WTC11 (cell line): ENCODE measurements at regions of chr12 and their contacts with region 1.

Region 1: GRCh38 chr12:124906606-124907261 is 7.7 kb downstream of the UBC start:
- DNase-seq: peak; percentile 92
- ATAC-seq: peak; percentile 71
- H3K4me3 Mint-ChIP-seq: no peak overlapping the region
- H3K27ac Mint-ChIP-seq: no peak overlapping the region
- H3K4me1 Mint-ChIP-seq: peaks cover 35% of the 10 kb centered on the region
- H3K27me3 Mint-ChIP-seq: no peaks in the 10 kb centered on the region
- CTCF ChIP-seq: peak; percentile 91

Region 2: GRCh38 chr12:124842073-124842749 is 64.5 kb before region 1 on chr12:
- CTCF ChIA-PET with region 1: interaction called, 10 read pairs
- POLR2A ChIA-PET with region 1: no interaction called
- DNase-seq: no peak
- ATAC-seq: no peak
- H3K4me3 Mint-ChIP-seq: no peak overlapping the region
- H3K27ac Mint-ChIP-seq: peak overlapping the region; percentile 84
- H3K4me1 Mint-ChIP-seq: peaks cover 23% of the 10 kb centered on the region
- H3K27me3 Mint-ChIP-seq: no peaks in the 10 kb centered on the region
- CTCF ChIP-seq: no peak

Region 3: GRCh38 chr12:124869034-124869665 is 37.6 kb before region 1 on chr12:
- CTCF ChIA-PET with region 1: interaction called, 12 read pairs
- POLR2A ChIA-PET with region 1: no interaction called
- DNase-seq: peak; percentile 40
- ATAC-seq: peak; percentile 75
- H3K4me3 Mint-ChIP-seq: no peak overlapping the region
- H3K27ac Mint-ChIP-seq: peak overlapping the region; percentile 78
- H3K4me1 Mint-ChIP-seq: peaks cover 14% of the 10 kb centered on the region
- H3K27me3 Mint-ChIP-seq: peaks cover 5% of the 10 kb centered on the region
- CTCF ChIP-seq: no peak

Region 4: GRCh38 chr12:124917135-124917840 is 10.6 kb after region 1 on chr12:
- CTCF ChIA-PET with region 1: interaction called, 41 read pairs
- POLR2A ChIA-PET with region 1: interaction called, 5 read pairs
- DNase-seq: peak; percentile 95
- ATAC-seq: peak; percentile 87
- H3K4me3 Mint-ChIP-seq: peak overlapping the region; percentile 82
- H3K27ac Mint-ChIP-seq: peak overlapping the region; percentile 100
- H3K4me1 Mint-ChIP-seq: peaks cover 82% of the 10 kb centered on the region
- H3K27me3 Mint-ChIP-seq: no peaks in the 10 kb centered on the region
- CTCF ChIP-seq: no peak